Activated CD8-positive, alpha-beta T cell treated with anti-CD3 and anti-CD28 coated beads for 36 hours (primary cell): ENCODE measurements at regions of chr20 and their contacts with region 1.

Region 1: GRCh38 chr20:63223221-63224207 is 7.6 kb upstream of the YTHDF1 start:
- DNase-seq: peak; percentile 68
- ATAC-seq: peak; percentile 80
- H3K4me3 Mint-ChIP-seq: no peak overlapping the region
- H3K27ac Mint-ChIP-seq: no peak overlapping the region
- H3K4me1 Mint-ChIP-seq: no peaks in the 10 kb centered on the region
- H3K27me3 Mint-ChIP-seq: no peaks in the 10 kb centered on the region
- CTCF ChIP-seq: peak; percentile 97

Region 2: GRCh38 chr20:63191400-63191799 is 32.1 kb before region 1 on chr20:
- CTCF ChIA-PET with region 1: interaction called, 23 read pairs
- POLR2A ChIA-PET with region 1: no interaction called
- intact Hi-C with region 1: no loop called
- DNase-seq: no peak
- ATAC-seq: no peak
- H3K4me3 Mint-ChIP-seq: no peak overlapping the region
- H3K27ac Mint-ChIP-seq: no peak overlapping the region
- H3K4me1 Mint-ChIP-seq: peaks cover 2% of the 10 kb centered on the region
- H3K27me3 Mint-ChIP-seq: no peaks in the 10 kb centered on the region
- CTCF ChIP-seq: no peak

Region 3: DNA sequence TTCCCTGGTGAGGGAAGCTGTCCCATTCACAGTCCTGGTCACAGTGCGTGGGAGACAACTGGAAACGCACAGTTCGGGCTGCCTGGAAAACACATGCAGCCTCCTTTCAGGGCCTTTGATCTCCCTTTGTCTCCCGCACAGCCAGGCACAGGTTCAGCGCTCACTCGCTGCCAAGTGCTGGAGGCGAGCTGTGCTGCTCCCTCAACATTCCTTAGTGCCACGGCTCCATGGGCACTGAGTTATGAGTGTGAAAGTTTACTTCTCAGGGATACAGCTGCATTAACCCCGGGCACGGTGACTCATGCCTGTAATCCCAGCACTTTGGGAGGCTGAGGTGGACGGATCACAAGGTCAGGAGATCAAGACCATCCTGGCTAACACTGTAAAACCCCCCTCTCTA is 16.6 kb before region 1 on chr20:
- CTCF ChIA-PET with region 1: interaction called, 82 read pairs
- POLR2A ChIA-PET with region 1: no interaction called
- intact Hi-C with region 1: no loop called
- DNase-seq: no peak
- ATAC-seq: no peak
- H3K4me3 Mint-ChIP-seq: no peak overlapping the region
- H3K27ac Mint-ChIP-seq: no peak overlapping the region
- H3K4me1 Mint-ChIP-seq: peaks cover 26% of the 10 kb centered on the region
- H3K27me3 Mint-ChIP-seq: no peaks in the 10 kb centered on the region
- CTCF ChIP-seq: no peak

Region 4: GRCh38 chr20:63246490-63247288 is 23.2 kb after region 1 on chr20:
- CTCF ChIA-PET with region 1: interaction called, 12 read pairs
- POLR2A ChIA-PET with region 1: interaction called, 4 read pairs
- intact Hi-C with region 1: no loop called
- DNase-seq: no peak
- ATAC-seq: no peak
- H3K4me3 Mint-ChIP-seq: no peak overlapping the region
- H3K27ac Mint-ChIP-seq: no peak overlapping the region
- H3K4me1 Mint-ChIP-seq: no peaks in the 10 kb centered on the region
- H3K27me3 Mint-ChIP-seq: peaks cover 16% of the 10 kb centered on the region
- CTCF ChIP-seq: no peak

Region 5: DNA sequence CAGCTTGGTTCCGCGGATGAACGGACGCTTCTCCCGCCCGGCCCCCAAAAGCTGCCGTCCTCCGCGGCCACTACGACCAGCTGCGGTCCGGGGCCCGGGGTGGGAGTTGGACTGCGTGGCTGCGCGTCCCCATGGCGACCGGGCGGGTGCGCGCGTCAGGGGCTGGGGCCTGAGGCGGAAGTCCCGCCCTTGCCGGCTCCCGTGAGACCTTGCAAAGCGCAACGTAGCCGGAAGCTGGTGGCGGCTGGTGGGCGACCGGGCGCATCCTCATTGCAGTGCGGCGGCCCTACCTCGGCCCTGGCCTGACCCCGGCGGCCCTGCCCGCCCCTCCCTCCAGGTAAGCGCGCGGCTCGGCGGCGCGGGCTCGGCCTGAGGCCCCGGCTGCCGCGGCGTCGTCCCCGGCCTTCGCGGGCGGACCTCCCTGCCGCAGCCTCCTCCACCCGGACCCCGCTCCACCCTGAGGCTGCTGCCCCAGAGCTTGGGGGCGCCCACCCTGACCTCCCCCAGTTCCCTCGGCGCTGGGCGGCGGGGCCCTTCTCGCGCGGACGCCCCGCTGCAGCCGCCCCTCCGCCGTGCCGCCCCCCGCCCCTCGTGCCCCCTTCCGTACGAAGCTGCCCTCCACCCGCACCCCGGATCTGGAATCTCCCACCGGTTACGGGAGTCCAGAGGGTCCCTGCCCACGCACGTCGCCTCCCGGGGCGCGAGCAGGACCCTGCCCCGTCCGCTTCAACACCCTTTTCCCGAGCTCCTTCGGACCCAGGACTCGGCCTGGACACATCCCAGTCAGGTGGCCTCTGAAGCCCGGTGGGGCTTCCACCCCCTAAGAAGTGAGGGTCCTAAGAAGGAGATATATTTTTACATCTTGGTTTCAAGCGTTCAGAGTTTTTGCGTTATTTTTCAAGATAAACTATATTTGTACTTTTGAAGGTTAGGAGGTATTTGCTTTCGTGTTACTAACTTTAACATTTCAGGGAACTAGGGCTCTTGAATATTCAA is 49.4 kb after region 1 on chr20 and contains the start of gene ARFGAP1:
- CTCF ChIA-PET with region 1: interaction called, 23 read pairs
- POLR2A ChIA-PET with region 1: no interaction called
- intact Hi-C with region 1: no loop called
- DNase-seq: peak; percentile 96
- ATAC-seq: peak; percentile 98
- H3K4me3 Mint-ChIP-seq: peak within 1 kb of the TSS; percentile 79
- H3K27ac Mint-ChIP-seq: peak within 1 kb of the TSS; percentile 72
- H3K4me1 Mint-ChIP-seq: peaks cover 21% of the 10 kb centered on the region
- H3K27me3 Mint-ChIP-seq: no peaks in the 10 kb centered on the region
- CTCF ChIP-seq: no peak
- total RNA-seq, gene ARFGAP1: 71.3 to 75.0 TPM

Region 6: DNA sequence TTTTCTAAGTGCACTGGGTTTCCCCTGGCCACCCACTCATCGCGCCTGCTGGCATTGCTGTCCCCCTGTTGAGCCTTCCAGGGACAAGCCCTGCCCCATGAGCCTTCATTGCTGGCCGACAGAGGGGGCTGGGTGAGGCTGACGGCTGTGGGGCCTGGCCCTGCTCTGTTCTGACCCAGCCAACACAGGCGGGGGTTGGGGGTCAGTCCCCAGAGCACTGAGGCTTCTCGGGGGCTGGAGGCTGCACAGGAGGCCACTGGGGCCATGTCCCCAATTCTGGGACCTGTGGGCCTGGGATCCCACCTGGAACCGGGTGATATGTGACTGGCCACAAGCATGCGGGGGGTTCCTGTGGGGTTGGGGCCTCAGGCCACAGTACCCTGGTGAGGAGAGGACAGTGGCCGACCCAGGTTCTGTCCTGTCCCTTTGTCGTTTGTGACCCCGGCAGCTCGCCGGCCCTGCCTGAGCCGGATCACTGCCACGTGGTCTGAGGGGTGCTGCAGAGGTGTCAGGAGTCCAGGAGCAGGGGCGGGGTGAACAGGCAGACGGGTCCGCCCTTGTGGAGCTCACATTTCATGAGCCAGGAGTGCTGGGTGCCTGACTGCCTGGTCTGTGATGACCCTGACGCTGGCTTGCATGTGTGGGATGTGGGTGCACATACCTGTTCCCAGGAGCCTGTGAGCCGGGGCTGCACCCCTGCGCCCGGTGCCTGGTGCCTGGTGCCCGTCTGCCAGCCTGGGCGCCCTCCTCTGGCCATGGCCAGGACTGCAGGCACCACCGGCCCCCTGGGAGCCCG is 67.4 kb after region 1 on chr20:
- CTCF ChIA-PET with region 1: interaction called, 14 read pairs
- POLR2A ChIA-PET with region 1: interaction called, 4 read pairs
- intact Hi-C with region 1: loop called (anchors 2 kb)
- DNase-seq: peak; percentile 78
- ATAC-seq: peak; percentile 90
- H3K4me3 Mint-ChIP-seq: no peak overlapping the region
- H3K27ac Mint-ChIP-seq: no peak overlapping the region
- H3K4me1 Mint-ChIP-seq: peaks cover 2% of the 10 kb centered on the region
- H3K27me3 Mint-ChIP-seq: peaks cover 3% of the 10 kb centered on the region
- CTCF ChIP-seq: peak; percentile 82

Region 7: DNA sequence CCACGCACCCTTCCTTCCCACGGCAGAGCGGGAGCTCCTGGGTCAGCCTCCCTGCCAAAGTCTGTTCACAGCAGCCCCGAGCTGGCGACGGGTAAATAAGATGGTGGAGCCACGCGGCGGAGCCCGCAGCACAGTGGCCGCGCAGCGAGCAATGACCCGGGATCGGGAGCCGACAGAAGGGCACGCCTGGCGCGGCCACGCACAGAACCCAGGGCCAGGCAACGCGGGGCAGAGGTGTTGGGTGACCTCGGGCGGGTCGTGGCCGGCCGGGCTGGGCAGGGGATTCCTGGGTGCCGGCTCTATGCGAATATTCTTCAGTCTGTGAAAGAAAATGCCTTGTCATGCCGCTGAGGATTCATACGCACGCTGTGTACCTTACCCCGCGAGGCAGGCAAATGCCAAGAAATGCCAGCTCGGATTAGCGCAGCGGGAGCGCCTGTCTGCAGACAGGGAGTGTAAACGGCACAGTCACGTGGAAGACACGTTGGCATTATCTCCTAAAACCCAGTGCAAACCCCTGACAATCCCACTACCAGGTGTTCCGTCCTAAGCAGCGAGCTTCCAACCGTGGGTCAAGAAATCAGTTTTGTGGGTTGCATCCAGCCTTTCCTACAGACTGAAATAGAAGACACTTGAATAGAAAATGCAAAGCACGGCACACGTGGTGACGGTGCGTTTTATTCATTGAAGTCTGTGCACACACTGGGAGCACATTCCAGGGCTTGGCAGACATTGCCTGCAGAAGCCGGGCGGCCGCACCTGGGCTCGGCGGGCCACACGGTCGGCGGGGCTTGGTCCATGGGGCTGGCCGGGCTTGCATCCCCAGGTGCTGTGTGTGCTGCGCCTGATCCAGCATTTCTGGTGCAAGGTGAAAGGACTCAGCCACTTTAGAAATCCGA is 119.3 kb after region 1 on chr20:
- CTCF ChIA-PET with region 1: no interaction called
- POLR2A ChIA-PET with region 1: no interaction called
- intact Hi-C with region 1: no loop called
- DNase-seq: no peak
- ATAC-seq: no peak
- H3K4me3 Mint-ChIP-seq: no peak overlapping the region
- H3K27ac Mint-ChIP-seq: no peak overlapping the region
- H3K4me1 Mint-ChIP-seq: no peaks in the 10 kb centered on the region
- H3K27me3 Mint-ChIP-seq: peaks cover 16% of the 10 kb centered on the region
- CTCF ChIP-seq: no peak

Region 8: DNA sequence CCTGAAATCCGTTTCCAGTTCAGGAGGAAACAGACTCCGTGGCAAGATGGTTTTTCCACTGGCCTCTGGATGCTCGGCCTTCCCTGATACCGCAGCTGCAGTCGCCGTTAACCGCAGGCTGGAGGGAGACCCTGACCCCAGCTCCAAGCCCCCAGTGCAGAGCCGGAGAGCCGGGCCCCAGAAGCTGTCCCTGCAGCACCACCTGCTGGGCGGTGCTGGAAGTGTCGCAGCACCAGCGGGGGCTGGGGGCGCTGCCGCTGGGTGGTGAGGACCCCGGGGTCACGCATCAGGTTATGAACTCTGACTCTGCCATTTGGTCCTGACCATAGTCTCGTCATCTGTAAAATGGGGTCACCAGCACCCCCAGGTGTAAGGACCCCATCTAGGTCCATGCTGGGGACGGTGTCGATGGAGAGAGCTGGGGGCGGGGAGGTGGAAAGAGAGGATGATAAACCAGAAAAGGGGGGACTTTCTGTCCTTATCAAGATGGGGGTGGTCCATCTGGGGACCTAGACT is 158.4 kb after region 1 on chr20:
- CTCF ChIA-PET with region 1: interaction called, 33 read pairs
- POLR2A ChIA-PET with region 1: no interaction called
- intact Hi-C with region 1: loop called (anchors 10 kb)
- DNase-seq: peak; percentile 27
- ATAC-seq: peak; percentile 65
- H3K4me3 Mint-ChIP-seq: no peak overlapping the region
- H3K27ac Mint-ChIP-seq: no peak overlapping the region
- H3K4me1 Mint-ChIP-seq: no peaks in the 10 kb centered on the region
- H3K27me3 Mint-ChIP-seq: peaks cover 11% of the 10 kb centered on the region
- CTCF ChIP-seq: peak; percentile 99